ENCODE measurements at regions of chr6 and their contacts with region 1.

Region 1: DNA sequence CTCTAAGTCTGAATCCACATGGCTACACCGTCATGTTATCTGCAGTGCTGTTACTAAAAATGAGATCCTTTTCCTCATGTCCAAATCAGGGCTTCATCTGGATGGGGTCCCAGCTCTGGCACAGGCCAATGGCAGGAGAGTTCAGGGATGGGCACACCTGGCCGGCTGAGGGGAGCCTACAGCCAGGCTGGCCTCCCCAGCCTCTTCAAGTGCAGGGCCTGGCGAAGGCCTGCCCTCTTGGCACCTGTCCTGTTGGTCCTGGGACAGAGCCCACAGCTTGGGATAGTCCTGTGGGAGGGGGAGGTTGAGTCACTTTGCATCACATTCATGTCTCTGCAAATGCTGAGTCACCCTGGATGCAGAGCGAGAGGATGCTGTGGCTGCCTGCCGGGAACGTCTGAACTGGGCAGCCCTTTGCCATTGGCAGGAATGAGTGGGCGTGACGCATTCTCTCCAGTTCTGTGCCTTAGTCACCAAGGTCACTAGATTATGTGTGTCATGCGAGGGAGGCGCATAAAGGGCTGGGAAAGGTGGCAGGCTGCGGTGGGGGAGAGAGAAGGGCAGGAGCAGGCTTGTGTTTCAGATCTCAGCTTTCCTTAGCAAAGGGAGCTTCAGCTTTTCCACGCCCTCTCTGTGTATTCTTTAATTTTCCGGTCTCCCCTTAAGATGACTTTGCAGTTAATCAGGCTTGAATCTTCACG is 223.2 kb upstream of the ECI2 start:
- DNase-seq: peak; percentile 94

Region 2: DNA sequence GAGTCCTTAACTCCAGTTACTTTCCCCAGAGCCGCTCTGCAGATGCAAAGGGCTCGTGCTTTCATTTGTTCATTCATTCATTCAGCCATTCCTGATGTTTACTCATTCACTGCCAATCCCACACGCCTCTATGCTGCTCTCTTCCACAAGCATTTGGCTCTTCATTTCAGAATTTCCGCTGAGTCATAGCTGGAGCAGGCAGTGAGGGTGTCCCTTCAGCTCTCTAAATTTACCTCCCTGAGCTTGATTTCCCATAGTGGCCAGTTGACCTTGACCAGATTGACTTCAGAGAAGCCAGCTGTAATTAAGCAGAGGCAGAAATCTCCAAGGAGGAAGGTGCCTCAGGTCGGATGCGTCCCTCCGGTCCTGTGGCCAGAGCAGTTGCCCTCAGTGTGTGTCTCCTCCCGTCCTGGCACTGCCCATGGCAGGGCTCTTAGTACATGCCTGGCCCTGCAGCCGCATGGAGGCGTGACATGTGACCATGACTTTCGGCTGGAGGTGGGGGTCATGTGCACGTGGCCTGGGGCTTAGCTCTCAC is 43.9 kb after region 1 on chr6:
- intact Hi-C with region 1: loop called (anchors 5 kb)
- DNase-seq: no peak

Region 3: DNA sequence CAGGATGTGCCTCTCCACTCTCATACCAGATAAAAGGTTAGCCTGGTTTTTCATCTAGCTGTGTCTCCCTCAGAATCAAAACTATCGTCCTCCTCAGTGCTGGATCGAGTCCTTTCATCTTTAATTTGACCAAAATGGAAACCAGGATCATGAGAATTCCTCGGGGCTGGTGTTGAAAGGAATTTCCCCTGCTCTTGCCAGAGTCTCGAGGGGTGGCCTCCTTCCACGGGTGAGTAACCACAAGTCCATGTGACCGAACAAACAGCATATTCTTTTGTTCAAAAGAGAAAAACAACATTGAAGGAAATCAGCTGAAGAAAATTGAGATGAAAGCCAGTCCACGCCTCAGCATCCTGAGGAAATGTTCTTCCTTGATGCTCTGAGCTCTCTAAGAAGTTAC is 251.7 kb after region 1 on chr6:
- intact Hi-C with region 1: loop called (anchors 5 kb)
- DNase-seq: no peak

Region 4: DNA sequence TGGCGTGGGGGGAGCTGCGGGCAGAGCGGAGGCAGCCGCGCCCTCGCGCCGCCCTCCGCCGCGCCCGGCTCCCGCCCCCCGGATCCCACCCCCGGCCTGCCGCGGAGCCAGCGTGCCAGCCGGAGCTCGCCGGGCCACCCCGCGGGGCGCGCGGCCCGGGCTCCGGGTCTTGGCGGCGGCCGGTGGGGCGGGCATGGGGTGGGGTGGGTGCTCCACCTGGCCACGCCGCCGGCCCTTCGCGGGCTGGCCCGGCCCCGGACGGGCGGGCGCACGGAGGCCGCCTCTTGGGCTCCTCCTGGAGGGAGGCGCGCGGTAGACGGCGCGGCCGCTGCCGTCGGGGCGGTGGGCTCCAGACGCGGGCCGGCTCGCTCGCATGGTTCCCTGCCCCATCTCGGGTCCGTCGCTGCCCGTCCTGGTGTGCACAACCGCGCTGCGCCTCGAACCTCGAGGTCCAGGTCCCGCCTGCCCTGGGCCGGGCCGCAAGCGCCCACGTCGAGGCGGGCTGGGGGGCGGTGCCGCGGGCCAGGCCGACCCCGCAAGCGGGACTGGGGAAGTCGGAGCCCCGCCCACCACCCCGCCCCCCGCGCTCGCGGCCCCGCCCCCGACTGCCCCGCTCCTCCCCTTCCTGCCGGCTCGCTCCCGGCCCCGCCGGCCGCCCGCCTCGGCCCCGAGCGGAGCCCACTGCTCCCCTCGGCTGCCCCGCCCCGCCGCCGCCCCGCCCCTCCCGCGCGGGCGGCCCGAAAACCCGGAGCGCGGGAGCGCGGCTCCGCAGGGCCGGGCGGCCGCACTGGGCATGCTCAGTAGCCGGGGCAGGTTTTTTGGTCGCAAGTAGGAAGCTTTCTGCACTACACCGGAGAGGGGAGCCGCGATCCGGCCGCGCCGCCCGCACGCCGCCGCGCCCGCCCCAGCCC is 417.3 kb after region 1 on chr6 and contains the start of gene CDYL:
- intact Hi-C with region 1: loop called (anchors 10 kb)
- DNase-seq: peak; percentile 93
- total RNA-seq, gene CDYL: 36.3 TPM

Region 5: GRCh38 chr6:4805553-4806336 is 447.2 kb after region 1 on chr6:
- intact Hi-C with region 1: loop called (anchors 10 kb)
- DNase-seq: no peak

Measured in cardiac septum (tissue), 1 donor.